K562 (cell line): ENCODE measurements at regions of chr2 and their contacts with region 1.

Region 1: GRCh38 chr2:124908411-124908810 is 883.3 kb downstream of the CNTNAP5 start:
- DNase-seq: no peak
- ATAC-seq: no peak
- H3K4me3 ChIP-seq: no peak overlapping the region
- H3K27ac ChIP-seq: no peak overlapping the region
- H3K4me1 ChIP-seq: no peaks in the 10 kb centered on the region
- H3K27me3 ChIP-seq: no peaks in the 10 kb centered on the region
- CTCF ChIP-seq: no peak
- EP300 ChIP-seq: no peak
- POLR2A ChIP-seq: no peak
- RAD21 ChIP-seq: no peak

Region 2: DNA sequence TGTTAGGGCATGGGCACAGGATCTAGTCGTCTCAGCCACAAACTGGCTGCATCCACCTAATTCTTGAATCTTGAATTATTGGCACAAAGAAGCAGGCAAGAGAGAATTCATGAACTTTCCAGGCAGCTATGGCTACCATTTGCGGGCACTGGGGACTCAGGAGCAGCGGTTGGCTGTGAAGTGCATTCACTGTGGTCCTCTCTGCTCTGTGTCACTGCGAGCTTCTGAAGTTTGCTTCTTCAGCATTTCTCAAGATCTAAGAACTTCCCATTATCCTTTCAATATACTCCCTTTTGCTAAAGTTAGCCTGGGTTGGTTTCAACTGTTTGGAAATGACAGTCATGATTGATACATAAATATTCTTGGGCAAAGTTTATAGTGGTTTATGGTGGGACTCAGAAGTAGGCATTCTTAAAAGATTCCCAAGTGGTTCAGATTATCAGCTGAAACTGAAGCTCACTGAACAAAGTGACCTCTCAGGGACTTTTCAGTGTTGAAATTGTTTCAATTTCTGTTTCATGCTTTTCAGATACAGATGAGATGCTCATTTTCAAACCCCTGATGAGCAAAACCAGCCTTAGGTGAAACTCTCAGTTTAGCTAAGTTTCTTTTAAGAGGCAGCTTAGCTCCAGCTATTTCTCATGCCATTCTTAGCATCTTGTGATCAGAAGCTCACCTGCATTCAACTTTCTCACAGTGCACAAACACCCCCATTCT is 489.3 kb after region 1 on chr2:
- CTCF ChIA-PET with region 1: no interaction called
- POLR2A ChIA-PET with region 1: no interaction called
- in situ Hi-C with region 1: no loop called
- intact Hi-C with region 1: loop called (anchors 5 kb)
- DNase-seq: no peak
- ATAC-seq: no peak
- H3K4me3 ChIP-seq: no peak overlapping the region
- H3K27ac ChIP-seq: no peak overlapping the region
- H3K4me1 ChIP-seq: no peaks in the 10 kb centered on the region
- H3K27me3 ChIP-seq: no peaks in the 10 kb centered on the region
- CTCF ChIP-seq: no peak
- EP300 ChIP-seq: no peak
- POLR2A ChIP-seq: no peak
- RAD21 ChIP-seq: no peak